ENCODE measurements at regions of chr6 and their contacts with region 1.

Region 1: GRCh38 chr6:43608310-43608763 is 20.7 kb downstream of the GTPBP2 start:
- DNase-seq: peak; percentile 17 to 84
- H3K4me3 ChIP-seq: no peak overlapping the region
- H3K27ac ChIP-seq: no peak overlapping the region
- H3K4me1 ChIP-seq: no peaks in the 10 kb centered on the region
- H3K27me3 ChIP-seq: no peaks in the 10 kb centered on the region
- CTCF ChIP-seq: peak; percentile 14 to 90 (median 72)
- EP300 ChIP-seq: no peak
- POLR2A ChIP-seq: no peak
- RAD21 ChIP-seq: peak; percentile 64 to 72

Region 2: DNA sequence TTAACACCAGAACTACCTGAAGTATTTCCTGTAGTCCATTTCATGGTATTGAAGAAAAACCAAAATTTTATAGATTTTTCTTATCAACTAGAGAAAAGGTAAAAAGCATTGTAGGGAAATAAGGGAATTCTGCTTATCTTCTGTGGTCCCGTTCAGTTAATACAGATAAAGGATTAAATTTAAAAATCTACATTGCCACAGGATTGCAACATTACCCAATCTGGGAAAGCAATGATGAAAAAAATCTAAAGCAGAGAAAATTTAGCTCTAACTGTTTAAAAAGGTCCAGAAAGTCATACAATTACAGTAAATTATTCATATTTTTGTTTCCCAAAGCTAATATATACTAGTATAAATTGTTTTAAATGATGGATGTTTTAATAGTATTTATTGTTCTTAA is 14.4 kb before region 1 on chr6:
- CTCF ChIA-PET with region 1: interaction called, 11 read pairs
- POLR2A ChIA-PET with region 1: interaction called, 9 read pairs
- DNase-seq: no peak
- H3K4me3 ChIP-seq: no peak overlapping the region
- H3K27ac ChIP-seq: no peak overlapping the region
- H3K4me1 ChIP-seq: no peaks in the 10 kb centered on the region
- H3K27me3 ChIP-seq: no peaks in the 10 kb centered on the region
- CTCF ChIP-seq: no peak
- EP300 ChIP-seq: no peak
- POLR2A ChIP-seq: no peak
- RAD21 ChIP-seq: no peak

Region 3: DNA sequence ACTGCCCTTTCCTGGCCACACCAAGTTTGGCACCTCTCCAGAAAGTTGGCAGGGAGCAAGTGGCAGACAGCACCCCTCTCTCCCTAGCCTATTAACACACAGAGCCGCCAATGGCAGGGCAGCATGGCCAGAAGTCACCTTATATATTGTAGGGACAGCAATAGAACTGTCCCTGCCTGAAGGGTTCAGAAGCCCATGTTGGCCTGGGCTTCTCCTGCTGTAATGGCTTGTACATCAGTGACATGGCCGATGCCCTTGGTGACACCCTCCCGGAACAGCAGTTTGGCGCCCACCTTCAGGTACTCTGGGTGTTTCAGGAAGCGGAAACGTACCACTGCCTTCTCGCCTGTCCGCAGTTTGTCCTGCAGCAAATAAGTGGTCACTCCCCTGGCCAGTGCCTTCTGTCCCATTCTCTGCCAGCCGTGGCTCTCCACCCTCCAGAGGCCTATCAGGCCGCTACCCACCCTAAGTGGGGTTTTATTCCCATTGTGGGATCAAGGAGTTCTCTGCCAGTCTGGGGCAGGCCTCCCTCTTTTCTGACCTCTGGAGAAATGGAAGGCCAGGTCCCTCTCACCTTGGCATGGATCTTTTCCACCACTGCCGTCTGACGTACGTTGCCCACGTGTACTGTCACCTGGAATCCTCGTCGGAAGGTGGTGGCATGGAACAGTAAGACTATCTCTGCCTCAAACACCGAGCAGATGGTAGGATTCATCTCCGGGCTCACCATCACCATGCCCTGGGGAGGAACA is 13.3 kb after region 1 on chr6:
- CTCF ChIA-PET with region 1: interaction called, 23 read pairs
- POLR2A ChIA-PET with region 1: interaction called, 9 read pairs
- DNase-seq: no peak
- H3K4me3 ChIP-seq: no peak overlapping the region
- H3K27ac ChIP-seq: no peak overlapping the region; the same call in 1 of the 2 replicates
- H3K4me1 ChIP-seq: no peaks in the 10 kb centered on the region
- H3K27me3 ChIP-seq: no peaks in the 10 kb centered on the region
- CTCF ChIP-seq: no peak
- EP300 ChIP-seq: no peak
- POLR2A ChIP-seq: no peak
- RAD21 ChIP-seq: no peak

Measured in H1 (cell line).